ENCODE measurements at regions of chr1 and their contacts with region 1.

Region 1: GRCh38 chr1:8408151-8408839 is 90.4 kb downstream of the SLC45A1 start:
- DNase-seq: peak; percentile 96
- H3K4me3 ChIP-seq: peak overlapping the region; percentile 23
- H3K27ac ChIP-seq: peak overlapping the region; percentile 90
- H3K4me1 ChIP-seq: peaks cover 88% of the 10 kb centered on the region
- H3K27me3 ChIP-seq: no peaks in the 10 kb centered on the region
- CTCF ChIP-seq: no peak

Region 2: GRCh38 chr1:8015036-8015808 is 393.1 kb before region 1 on chr1:
- CTCF ChIA-PET with region 1: no interaction called
- POLR2A ChIA-PET with region 1: no interaction called
- intact Hi-C with region 1: no loop called
- DNase-seq: peak; percentile 90
- H3K4me3 ChIP-seq: no peak overlapping the region
- H3K27ac ChIP-seq: peak overlapping the region; percentile 43
- H3K4me1 ChIP-seq: peaks cover 56% of the 10 kb centered on the region
- H3K27me3 ChIP-seq: no peaks in the 10 kb centered on the region
- CTCF ChIP-seq: peak; percentile 78

Region 3: GRCh38 chr1:8423650-8424538 is 15.6 kb after region 1 on chr1:
- CTCF ChIA-PET with region 1: interaction called, 12 read pairs
- POLR2A ChIA-PET with region 1: no interaction called
- intact Hi-C with region 1: no loop called
- DNase-seq: peak; percentile 85
- H3K4me3 ChIP-seq: peak overlapping the region; percentile 79
- H3K27ac ChIP-seq: peak overlapping the region; percentile 87
- H3K4me1 ChIP-seq: peaks cover 43% of the 10 kb centered on the region
- H3K27me3 ChIP-seq: no peaks in the 10 kb centered on the region
- CTCF ChIP-seq: no peak

Region 4: DNA sequence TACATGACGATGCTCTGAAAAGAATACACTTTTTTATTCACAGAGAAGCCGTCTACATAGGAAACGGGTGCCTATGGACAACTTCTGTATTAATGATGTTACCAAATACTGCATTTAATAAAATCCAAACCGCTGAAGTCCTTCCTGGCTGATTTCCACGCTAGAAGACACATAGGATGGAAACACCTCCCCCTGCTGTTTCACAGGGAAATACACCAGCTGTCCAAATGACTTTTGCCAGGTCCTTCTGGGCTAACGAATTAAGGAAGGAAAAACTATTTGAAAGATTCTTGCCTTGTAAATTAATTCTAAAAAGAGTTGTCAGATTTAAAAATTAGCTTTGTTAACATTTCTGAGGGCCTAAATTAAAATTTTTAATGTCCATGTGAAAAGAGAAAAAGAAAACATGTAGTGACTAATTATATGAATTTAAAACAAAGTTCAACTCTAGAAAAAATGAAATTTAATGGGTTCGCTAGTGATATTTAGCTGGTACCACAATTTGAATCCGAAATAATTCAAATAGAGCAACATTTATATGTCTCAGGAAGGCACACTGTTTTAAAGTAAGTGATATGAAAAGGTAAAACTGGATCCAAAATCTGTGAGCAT is 263.1 kb after region 1 on chr1:
- CTCF ChIA-PET with region 1: interaction called, 12 read pairs
- POLR2A ChIA-PET with region 1: no interaction called
- intact Hi-C with region 1: no loop called
- DNase-seq: peak; percentile 89
- H3K4me3 ChIP-seq: no peak overlapping the region
- H3K27ac ChIP-seq: peak overlapping the region; percentile 83
- H3K4me1 ChIP-seq: peaks cover 95% of the 10 kb centered on the region
- H3K27me3 ChIP-seq: no peaks in the 10 kb centered on the region
- CTCF ChIP-seq: peak; percentile 91

Measured in A673 (cell line).